ENCODE measurements at regions of chr1 and their contacts with region 1.

Region 1: GRCh38 chr1:153572569-153573015 is 6.9 kb upstream of the S100A2 start:
- DNase-seq: peak; percentile 70
- H3K27ac ChIP-seq: peak overlapping the region; percentile 66
- CTCF ChIP-seq: peak; percentile 93

Region 2: GRCh38 chr1:153365303-153366095 is 207.1 kb before region 1 on chr1:
- CTCF ChIA-PET with region 1: no interaction called
- POLR2A ChIA-PET with region 1: no interaction called
- DNase-seq: peak; percentile 48
- H3K27ac ChIP-seq: peak overlapping the region; percentile 75
- CTCF ChIP-seq: no peak

Region 3: GRCh38 chr1:153478692-153479618 is 93.6 kb before region 1 on chr1:
- CTCF ChIA-PET with region 1: no interaction called
- POLR2A ChIA-PET with region 1: no interaction called
- DNase-seq: no peak
- H3K27ac ChIP-seq: no peak overlapping the region
- CTCF ChIP-seq: no peak

Region 4: GRCh38 chr1:153510984-153511410 is 61.6 kb before region 1 on chr1:
- CTCF ChIA-PET with region 1: interaction called, 28 read pairs
- POLR2A ChIA-PET with region 1: interaction called, 6 read pairs
- DNase-seq: peak; percentile 85
- H3K27ac ChIP-seq: peak overlapping the region; percentile 55
- CTCF ChIP-seq: peak; percentile 93

Region 5: DNA sequence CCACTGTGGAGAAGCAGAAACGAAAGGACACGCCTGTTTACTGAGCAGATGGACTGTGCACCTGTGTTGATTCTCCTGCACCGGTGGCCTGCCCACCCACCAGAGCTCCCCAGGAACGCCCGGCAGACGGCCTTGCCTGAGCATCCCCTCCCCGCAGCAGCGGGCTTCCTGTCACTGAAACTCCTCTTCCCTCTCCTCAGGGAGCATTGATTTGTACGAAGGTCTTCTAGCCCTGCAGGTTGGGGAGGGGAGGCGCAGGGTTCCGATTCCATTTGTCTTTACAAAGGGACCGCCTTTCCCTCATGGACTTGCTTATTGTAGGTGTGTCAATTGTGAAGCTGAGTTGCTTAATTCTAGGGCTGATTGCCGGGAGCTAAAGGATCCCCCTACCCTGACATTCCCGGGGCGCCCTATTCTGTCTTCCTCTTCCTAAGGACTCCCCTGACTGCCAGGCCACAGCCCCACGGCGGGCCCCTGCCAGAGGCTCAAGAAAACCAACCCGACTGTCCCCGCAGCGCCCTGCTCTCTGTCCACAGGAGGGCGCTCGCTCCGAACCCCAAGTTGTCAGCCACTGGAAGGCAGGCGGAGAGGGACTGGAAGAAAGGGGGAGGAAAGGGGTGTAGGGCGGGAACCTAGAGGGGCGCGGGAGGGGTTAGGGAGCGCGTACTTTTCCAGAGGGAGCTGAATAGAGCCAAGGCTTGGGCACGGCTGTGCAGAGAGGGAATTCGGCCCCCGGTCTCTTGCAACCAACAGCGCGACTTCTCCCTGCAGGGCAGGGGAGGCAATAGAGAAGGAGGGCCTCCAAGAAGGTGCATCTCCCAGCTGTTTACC is 39.6 kb before region 1 on chr1:
- CTCF ChIA-PET with region 1: interaction called, 32 read pairs
- POLR2A ChIA-PET with region 1: interaction called, 8 read pairs
- DNase-seq: peak; percentile 74
- H3K27ac ChIP-seq: peak overlapping the region; percentile 99
- CTCF ChIP-seq: peak; percentile 91

Region 6: DNA sequence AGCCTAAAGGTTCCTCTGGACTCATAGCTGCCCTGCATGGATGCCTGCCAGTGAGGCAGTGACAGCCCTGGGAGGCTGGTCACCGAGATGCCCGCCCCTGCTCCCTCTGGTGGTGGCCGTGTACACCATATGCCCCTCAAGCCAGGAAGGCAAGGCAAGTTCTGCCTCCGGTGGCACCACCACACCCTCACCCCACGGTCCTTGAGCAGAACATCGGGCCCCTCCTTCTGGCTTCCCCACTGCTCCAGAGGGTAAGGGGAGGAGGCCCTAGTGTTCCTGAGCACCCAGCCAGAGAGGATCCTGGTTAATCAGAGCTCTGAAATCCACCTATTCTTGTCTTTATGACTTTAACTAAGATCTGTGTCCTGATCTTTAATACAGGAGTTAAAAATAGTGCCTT is 45.1 kb after region 1 on chr1:
- CTCF ChIA-PET with region 1: interaction called, 25 read pairs
- POLR2A ChIA-PET with region 1: interaction called, 4 read pairs
- DNase-seq: no peak
- H3K27ac ChIP-seq: peak overlapping the region; percentile 99
- CTCF ChIP-seq: no peak; the same call in 1 of the 2 replicates

Region 7: DNA sequence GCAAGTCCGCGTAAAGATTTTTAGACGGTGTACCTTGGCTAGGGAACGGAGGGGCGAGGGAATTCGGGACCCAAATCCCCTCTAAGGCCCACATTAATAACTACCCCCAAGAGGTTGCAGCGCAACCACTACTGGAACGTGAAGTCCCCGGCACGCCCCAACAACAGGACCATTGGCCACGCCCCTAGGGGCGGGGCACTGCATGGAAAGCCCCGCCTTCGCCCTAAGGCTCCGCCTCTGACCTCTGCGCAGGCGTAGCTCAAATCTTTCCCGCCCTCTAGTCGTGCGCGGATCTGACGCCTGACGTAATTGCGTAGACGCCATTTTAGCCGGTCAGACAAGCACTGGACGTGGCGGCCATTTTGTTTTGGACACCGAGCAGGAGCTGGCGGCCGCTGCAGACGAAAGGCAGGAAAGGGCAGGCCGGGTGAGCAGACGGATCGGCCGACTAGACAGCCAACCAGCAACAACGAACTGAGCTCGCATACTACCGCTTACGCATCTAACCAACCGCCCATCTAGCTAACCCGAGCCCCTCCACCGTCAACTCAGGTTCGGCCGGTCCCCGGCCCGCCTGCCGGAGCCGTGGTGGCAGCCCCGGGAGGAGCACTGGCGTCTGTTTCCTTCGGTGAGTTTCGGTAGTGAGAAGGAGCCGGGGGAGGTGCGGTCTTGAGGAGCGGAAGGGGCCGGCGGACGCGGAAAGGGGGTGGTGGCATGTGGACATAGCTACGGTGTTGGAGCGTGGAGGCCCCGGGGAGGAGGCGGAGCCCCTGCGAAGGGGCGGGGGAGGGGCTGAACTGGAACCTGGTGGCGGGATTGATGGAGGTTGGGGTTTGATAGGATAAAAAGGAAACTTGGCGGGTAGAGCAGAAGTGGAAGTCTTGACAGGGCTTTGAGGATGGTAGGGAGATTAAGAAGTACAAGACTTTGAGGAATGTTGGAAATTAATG is 61.4 kb after region 1 on chr1 and contains the start of gene CHTOP:
- CTCF ChIA-PET with region 1: interaction called, 13 read pairs
- POLR2A ChIA-PET with region 1: interaction called, 6 read pairs
- DNase-seq: peak; percentile 94
- H3K27ac ChIP-seq: peak within 1 kb of the TSS; percentile 100
- CTCF ChIP-seq: no peak

Measured in RWPE1 (cell line).